ENCODE measurements at regions of chr15 and their contacts with region 1.

Region 1: DNA sequence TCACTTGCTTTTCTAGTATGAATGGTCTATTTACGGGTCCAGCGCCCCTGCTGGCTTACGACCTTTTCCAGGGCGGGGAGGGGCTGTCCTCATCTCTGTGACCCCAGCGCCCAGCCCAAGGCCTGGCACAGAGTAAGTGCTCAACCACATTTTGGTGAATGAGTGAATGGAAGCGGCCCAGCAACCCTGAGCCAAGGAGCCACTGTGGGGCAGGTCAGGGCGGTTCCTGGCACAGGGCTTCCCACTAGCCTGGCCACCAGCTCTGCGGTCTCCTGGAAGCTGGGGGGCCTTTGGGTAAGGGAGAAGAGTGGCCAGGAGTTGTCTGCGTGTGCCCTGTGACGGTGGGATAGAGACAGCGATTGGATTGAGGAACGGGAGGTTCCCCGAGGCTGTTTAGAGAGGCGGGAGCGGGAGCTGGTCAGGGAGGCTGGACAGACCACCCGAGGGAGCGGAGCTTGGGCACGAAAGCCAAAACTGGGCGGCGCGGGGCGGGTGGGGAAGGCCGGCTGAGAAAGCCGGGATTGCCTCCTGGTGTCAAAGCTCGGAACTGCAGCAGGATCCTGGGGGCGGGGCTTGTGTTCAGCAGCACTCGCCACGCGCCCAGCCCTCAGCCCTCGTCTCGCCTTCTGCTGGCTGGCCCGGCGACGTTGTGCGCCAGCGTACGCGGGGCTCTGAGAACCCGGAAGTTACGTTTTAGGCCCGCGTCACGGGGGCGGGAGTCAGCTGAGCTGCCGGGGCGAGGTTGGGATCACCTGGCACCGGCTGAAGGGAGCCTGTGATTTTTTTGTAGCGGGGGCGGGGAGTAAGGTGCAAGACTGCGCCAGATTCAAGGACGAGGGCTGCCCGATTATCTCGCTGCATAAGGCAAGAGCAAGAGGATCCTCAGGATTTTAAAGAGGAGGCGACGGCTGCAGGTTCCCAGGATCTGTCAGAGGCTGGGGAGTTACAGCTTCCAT is at the start of gene VPS18:
- DNase-seq: peak; percentile 97 to 98 (median 98)
- H3K4me3 ChIP-seq: peak within 1 kb of the TSS; percentile 53 to 86
- H3K4me3 Mint-ChIP-seq: peak within 1 kb of the TSS; percentile 95 to 100 (median 99)
- H3K27ac ChIP-seq: peak within 1 kb of the TSS; percentile 86
- H3K27ac Mint-ChIP-seq: peak within 1 kb of the TSS; percentile 95 to 99 (median 99)
- H3K4me1 ChIP-seq: peaks cover 21% of the 10 kb centered on the region
- H3K4me1 Mint-ChIP-seq: peaks cover 24 to 52% (median 36%) of the 10 kb centered on the region in 4 donors
- H3K27me3 ChIP-seq: no peaks in the 10 kb centered on the region
- H3K27me3 Mint-ChIP-seq: no peaks in the 10 kb centered on the region
- total RNA-seq, gene VPS18: 18.4 to 20.3 TPM

Region 2: GRCh38 chr15:40115670-40116093 is 778.3 kb before region 1 on chr15:
- CTCF ChIA-PET with region 1: no interaction called
- POLR2A ChIA-PET with region 1: no interaction called
- intact Hi-C with region 1: no loop called
- DNase-seq: peak in 1 of 5 donors; percentile 63
- H3K4me3 ChIP-seq: no peak overlapping the region
- H3K4me3 Mint-ChIP-seq: no peak overlapping the region
- H3K27ac ChIP-seq: no peak overlapping the region
- H3K27ac Mint-ChIP-seq: peak overlapping the region in 5 of 7 donors; percentile 48 to 88 (median 74)
- H3K4me1 ChIP-seq: peaks cover 7% of the 10 kb centered on the region
- H3K4me1 Mint-ChIP-seq: peaks cover 9 to 14% (median 11%) of the 10 kb centered on the region in 4 donors
- H3K27me3 ChIP-seq: no peaks in the 10 kb centered on the region
- H3K27me3 Mint-ChIP-seq: peaks cover 4 to 9% of the 10 kb centered on the region in 2 donors

Region 3: GRCh38 chr15:40564591-40565332 is 329.2 kb before region 1 on chr15 and contains the start of gene CCDC32:
- CTCF ChIA-PET with region 1: interaction called, 5 read pairs
- POLR2A ChIA-PET with region 1: interaction called, 4 read pairs
- intact Hi-C with region 1: loop called (anchors 10 kb)
- DNase-seq: peak; percentile 93 to 98 (median 96)
- H3K4me3 ChIP-seq: peak within 1 kb of the TSS; percentile 97 to 98
- H3K4me3 Mint-ChIP-seq: peak within 1 kb of the TSS; percentile 95 to 98 (median 97)
- H3K27ac ChIP-seq: peak within 1 kb of the TSS; percentile 92
- H3K27ac Mint-ChIP-seq: peak within 1 kb of the TSS; percentile 89 to 99 (median 98)
- H3K4me1 ChIP-seq: peaks cover 34% of the 10 kb centered on the region
- H3K4me1 Mint-ChIP-seq: peaks cover 26 to 65% (median 42%) of the 10 kb centered on the region in 4 donors
- H3K27me3 ChIP-seq: no peaks in the 10 kb centered on the region
- H3K27me3 Mint-ChIP-seq: no peaks in the 10 kb centered on the region
- total RNA-seq, gene CCDC32: 31.7 to 32.4 TPM

Region 4: GRCh38 chr15:40694688-40695468 is 199.1 kb before region 1 on chr15 and contains the start of gene RAD51:
- CTCF ChIA-PET with region 1: interaction called, 7 read pairs
- POLR2A ChIA-PET with region 1: interaction called, 14 read pairs
- intact Hi-C with region 1: loop called (anchors 1 kb)
- DNase-seq: peak; percentile 91 to 95 (median 92)
- H3K4me3 ChIP-seq: peak within 1 kb of the TSS; percentile 67 to 81
- H3K4me3 Mint-ChIP-seq: peak within 1 kb of the TSS; percentile 96 to 100 (median 98)
- H3K27ac ChIP-seq: peak within 1 kb of the TSS; percentile 95
- H3K27ac Mint-ChIP-seq: peak within 1 kb of the TSS; percentile 96 to 99 (median 99)
- H3K4me1 ChIP-seq: peaks cover 13% of the 10 kb centered on the region
- H3K4me1 Mint-ChIP-seq: peaks cover 11 to 32% (median 19%) of the 10 kb centered on the region in 4 donors
- H3K27me3 ChIP-seq: no peaks in the 10 kb centered on the region
- H3K27me3 Mint-ChIP-seq: no peaks in the 10 kb centered on the region
- total RNA-seq, gene RAD51: 0.93 to 1.7 TPM

Region 5: DNA sequence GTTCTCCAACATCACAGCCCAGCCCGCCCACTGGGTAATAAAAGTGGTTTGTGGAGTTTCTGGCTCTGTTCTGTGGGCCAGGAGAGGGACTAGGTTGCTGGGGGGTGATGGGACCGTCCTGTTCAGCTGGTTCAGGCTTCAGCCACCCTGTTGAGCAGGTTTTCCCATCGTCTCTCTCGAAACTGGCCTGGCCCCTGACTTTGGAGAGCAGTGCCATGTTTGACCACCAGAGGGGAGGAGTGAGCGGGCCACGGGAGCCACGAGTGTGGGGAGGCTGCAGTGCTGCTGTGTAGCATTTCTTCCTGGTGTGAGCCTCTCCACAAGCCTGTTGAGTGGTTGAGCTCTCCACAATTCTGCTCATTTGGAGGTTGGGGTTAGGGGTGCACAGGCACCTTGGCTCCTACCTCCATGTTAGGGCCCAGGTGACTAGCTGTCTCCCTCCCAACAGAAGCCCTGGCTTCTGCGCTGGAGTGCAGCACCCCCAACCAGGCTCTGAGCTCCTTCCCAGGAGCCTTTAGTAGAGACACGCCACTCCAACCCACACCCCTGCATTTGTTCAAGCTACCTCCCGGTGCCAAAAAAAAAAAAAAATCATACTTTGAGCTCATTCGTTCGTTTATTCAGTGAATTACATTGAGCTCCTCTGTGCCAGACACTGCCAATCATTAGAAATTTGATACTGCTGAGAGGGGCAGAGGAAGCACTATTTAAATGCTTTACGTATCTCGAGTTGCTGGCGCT is 36.2 kb before region 1 on chr15:
- CTCF ChIA-PET with region 1: interaction called, 245 read pairs
- POLR2A ChIA-PET with region 1: interaction called, 38 read pairs
- intact Hi-C with region 1: loop called (anchors 1 kb)
- DNase-seq: peak; percentile 72 to 82 (median 73)
- H3K4me3 ChIP-seq: no peak overlapping the region
- H3K4me3 Mint-ChIP-seq: no peak overlapping the region
- H3K27ac ChIP-seq: no peak overlapping the region
- H3K27ac Mint-ChIP-seq: peak overlapping the region in 1 of 7 donors; percentile 12
- H3K4me1 ChIP-seq: peaks cover 12% of the 10 kb centered on the region
- H3K4me1 Mint-ChIP-seq: peaks cover 6 to 20% (median 7%) of the 10 kb centered on the region in 4 donors
- H3K27me3 ChIP-seq: no peaks in the 10 kb centered on the region
- H3K27me3 Mint-ChIP-seq: peaks cover 1 to 4% of the 10 kb centered on the region in 2 donors

Region 6: DNA sequence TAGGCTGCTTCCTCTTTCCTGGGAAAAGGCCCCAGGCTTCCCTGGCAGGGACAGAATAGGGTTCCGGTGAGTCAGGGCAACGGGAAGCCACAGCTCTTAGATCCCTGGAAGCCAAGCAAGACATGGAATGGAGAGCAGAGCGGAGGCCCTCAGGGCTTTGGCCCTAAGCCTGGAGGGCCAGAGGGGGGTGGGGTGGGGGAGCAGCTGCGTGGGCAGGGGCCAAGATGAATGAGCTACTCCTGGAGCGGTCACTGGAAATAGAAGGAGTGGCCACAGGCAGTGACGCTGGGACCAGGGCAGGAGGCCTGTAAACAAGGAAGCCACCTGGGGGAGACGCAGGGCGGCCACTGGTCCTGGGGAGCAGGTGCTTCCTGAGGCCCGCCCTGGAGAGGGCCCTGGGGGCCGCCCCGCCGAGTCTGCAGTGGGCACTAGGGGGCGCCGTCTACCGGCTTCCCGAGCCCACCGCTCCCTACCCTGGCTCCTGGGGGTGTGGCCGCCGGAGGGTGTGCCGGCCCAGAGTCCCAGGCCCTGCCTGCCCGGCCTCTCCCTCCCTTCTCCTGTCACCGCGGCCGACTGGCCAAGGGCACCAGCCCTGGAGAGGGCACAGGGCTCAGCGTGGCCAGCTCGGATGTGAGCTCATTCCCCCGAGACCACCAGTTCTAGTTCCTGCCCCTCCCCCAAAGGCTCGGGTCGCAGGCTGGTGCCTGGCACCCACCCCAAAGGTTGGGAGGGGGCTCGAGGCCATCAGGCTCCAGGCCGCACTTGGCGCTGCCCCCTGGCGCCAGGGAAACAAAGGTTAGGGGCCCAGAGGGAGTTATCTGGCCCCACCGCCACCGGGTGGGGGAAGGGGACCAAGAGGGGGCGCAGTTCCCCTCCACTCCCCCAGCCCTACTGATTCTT is 12.3 kb after region 1 on chr15:
- CTCF ChIA-PET with region 1: interaction called, 102 read pairs
- POLR2A ChIA-PET with region 1: interaction called, 20 read pairs
- intact Hi-C with region 1: loop called (anchors 1 kb)
- DNase-seq: peak; percentile 64 to 68 (median 64)
- H3K4me3 ChIP-seq: peak overlapping the region; percentile 61 to 67
- H3K4me3 Mint-ChIP-seq: peak overlapping the region; percentile 42 to 88 (median 84)
- H3K27ac ChIP-seq: peak overlapping the region; percentile 58
- H3K27ac Mint-ChIP-seq: peak overlapping the region in 5 of 7 donors; percentile 70 to 91 (median 87)
- H3K4me1 ChIP-seq: peaks cover 20% of the 10 kb centered on the region
- H3K4me1 Mint-ChIP-seq: peaks cover 13 to 35% (median 24%) of the 10 kb centered on the region in 4 donors
- H3K27me3 ChIP-seq: no peaks in the 10 kb centered on the region
- H3K27me3 Mint-ChIP-seq: no peaks in the 10 kb centered on the region

Region 7: DNA sequence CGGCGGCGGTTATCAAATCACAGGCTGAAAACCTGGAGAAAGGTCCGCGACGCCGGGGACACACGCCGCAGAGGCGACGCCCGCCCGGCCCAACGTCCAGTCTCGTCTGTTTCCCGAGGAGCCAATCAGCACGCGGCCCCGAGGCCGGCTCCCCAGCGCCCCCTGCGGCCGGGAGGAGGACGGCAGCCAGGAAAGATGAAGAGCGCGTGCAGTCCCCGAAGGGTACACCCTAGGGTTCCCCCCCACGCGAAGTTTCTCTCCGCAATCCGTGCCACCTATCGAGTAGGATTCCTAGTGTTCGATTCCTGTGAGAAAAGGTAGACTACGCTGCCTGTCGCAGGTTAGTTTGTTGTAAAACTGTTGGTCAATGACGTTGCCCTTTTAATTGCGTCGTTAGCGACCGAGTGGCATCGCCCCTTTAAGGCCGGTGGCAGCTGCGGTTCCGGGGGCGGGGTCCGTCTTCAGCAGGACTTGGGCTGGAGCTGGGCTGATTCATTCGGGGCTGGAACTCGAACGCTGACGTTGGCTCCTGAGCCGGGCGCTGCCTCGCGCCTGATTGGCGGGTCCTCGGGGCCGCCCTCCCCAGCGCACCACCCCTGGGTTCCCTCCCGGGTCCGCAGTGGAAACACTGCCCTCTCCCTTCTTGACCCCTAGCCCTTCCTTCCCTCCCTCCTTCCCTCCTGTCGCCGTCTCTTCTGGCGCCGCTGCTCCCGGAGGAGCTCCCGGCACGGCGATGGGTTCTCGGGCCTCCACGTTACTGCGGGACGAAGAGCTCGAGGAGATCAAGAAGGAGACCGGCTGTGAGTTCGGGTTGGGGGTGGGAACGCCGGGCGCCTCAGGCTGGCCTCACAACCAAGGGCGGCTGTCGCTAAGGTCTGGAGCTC is 336.9 kb after region 1 on chr15 and contains the starts of genes CHP1 and EXD1:
- CTCF ChIA-PET with region 1: interaction called, 6 read pairs
- POLR2A ChIA-PET with region 1: interaction called, 7 read pairs
- intact Hi-C with region 1: loop called (anchors 1 kb)
- DNase-seq: peak; percentile 93 to 95 (median 94)
- H3K4me3 ChIP-seq: peak within 1 kb of the TSS; percentile 77 to 83
- H3K4me3 Mint-ChIP-seq: peak within 1 kb of the TSS; percentile 89 to 93 (median 90)
- H3K27ac ChIP-seq: peak within 1 kb of the TSS; percentile 81
- H3K27ac Mint-ChIP-seq: peak within 1 kb of the TSS; percentile 94 to 98 (median 97)
- H3K4me1 ChIP-seq: peaks cover 28% of the 10 kb centered on the region
- H3K4me1 Mint-ChIP-seq: peaks cover 21 to 42% (median 26%) of the 10 kb centered on the region in 4 donors
- H3K27me3 ChIP-seq: no peaks in the 10 kb centered on the region
- H3K27me3 Mint-ChIP-seq: peaks cover 0 to 1% of the 10 kb centered on the region in 2 donors
- total RNA-seq, gene CHP1: 26.4 to 27.1 TPM
- total RNA-seq, gene EXD1: not detected